ENCODE measurements at regions of chr17 and their contacts with region 1.

Region 1: GRCh38 chr17:77254951-77255825 is 114.4 kb downstream of the SEC14L1 start:
- DNase-seq: peak; percentile 50
- H3K4me3 ChIP-seq: no peak overlapping the region; the same call in 1 of the 2 replicates
- H3K27ac ChIP-seq: peak overlapping the region; percentile 47
- H3K27me3 ChIP-seq: no peaks in the 10 kb centered on the region
- CTCF ChIP-seq: no peak

Region 2: GRCh38 chr17:77235370-77235941 is 19.7 kb before region 1 on chr17:
- CTCF ChIA-PET with region 1: no interaction called
- POLR2A ChIA-PET with region 1: interaction called, 10 read pairs
- DNase-seq: peak; percentile 80
- H3K4me3 ChIP-seq: peak overlapping the region; percentile 46
- H3K27ac ChIP-seq: peak overlapping the region; percentile 90
- H3K27me3 ChIP-seq: no peaks in the 10 kb centered on the region
- CTCF ChIP-seq: no peak

Region 3: DNA sequence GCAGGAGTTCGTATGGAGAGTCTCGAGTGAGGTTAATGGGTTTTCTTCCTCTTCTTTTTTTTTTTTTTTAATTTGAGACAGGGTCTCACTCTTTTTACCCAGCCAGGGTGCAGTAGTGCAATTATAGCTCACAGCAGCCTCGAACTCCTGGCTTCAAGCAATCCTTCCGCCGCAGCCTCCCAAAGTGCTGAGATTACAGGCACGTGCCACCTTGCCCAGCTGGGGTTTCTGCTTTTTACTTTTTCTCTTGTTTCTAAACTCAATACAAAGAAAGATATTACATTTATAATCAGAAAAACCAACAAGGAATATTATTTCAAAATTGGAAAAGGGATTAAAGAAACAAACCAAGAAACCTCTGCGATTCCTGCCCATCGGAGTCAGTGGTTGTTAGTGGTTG is 61.5 kb after region 1 on chr17:
- CTCF ChIA-PET with region 1: no interaction called
- POLR2A ChIA-PET with region 1: no interaction called
- DNase-seq: no peak
- H3K4me3 ChIP-seq: no peak overlapping the region
- H3K27ac ChIP-seq: peak overlapping the region; percentile 92
- H3K27me3 ChIP-seq: no peaks in the 10 kb centered on the region
- CTCF ChIP-seq: no peak

Region 4: DNA sequence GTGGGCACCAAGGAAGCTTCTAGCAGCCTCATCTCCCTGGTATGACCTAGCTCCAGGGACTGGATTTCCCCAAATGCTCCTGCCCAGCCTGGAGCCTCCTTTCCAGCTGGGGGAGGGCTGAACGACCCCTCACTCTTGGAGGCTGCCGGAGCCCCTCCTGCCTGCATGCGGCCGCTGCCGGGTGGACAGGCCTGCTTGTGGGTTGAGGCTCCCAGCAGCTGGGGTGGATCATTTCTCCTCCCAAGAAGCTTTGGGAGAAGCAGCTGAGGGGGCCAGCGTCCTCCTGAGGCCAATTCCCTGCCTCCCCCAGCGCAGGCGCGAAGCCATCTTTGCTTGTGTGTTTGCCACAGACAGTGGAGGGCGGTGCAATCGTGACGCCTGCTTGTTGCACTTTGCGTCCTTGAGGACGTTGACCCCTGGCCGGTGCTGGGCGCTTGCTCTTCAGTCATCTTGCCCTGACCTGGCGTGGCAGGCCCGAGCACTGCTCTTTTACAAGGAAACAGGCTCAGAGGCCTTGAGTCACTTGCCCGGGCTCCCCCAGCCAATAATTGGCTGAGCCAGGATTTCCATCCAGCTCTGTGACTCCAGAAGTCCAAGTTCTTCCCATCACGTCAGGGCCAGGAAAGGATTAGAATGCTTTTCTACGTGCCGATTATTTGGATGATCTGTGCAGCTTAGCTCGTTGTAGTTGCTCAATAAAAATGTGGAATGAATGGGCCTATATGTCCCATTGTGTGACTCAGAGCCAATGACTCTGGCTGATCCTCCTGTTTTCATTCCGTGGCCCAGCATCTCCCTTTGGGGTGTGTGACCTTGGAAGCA is 99.4 kb after region 1 on chr17:
- CTCF ChIA-PET with region 1: no interaction called
- POLR2A ChIA-PET with region 1: no interaction called
- DNase-seq: peak; percentile 90
- H3K4me3 ChIP-seq: no peak overlapping the region
- H3K27ac ChIP-seq: peak overlapping the region; percentile 98
- H3K27me3 ChIP-seq: no peaks in the 10 kb centered on the region
- CTCF ChIP-seq: no peak